ENCODE measurements at regions of chr20 and their contacts with region 1.

Region 1: DNA sequence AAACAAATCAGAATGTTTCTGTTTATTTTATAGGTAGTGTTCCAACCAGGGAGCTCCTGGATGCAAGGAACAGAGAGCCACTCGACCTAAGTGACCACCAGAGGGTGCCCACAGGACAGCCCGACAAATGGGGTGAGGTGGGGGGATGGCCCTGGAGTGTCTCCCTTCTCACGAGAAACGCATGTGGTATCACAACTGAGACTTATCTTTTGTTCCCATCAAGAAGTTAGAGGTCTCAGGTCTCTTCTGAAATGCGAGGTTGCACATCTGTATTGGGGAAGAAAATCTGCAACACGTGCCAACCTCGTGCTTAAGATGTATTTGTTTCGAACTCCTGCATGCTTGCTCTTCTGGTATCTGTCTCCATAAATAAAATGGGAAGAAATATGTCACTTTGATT is 104.0 kb downstream of the ISM1 start:
- DNase-seq: peak; percentile 51
- H3K4me3 Mint-ChIP-seq: no peak overlapping the region
- H3K27ac Mint-ChIP-seq: no peak overlapping the region
- H3K4me1 Mint-ChIP-seq: no peaks in the 10 kb centered on the region
- H3K27me3 Mint-ChIP-seq: no peaks in the 10 kb centered on the region
- CTCF ChIP-seq: peak; percentile 38

Region 2: DNA sequence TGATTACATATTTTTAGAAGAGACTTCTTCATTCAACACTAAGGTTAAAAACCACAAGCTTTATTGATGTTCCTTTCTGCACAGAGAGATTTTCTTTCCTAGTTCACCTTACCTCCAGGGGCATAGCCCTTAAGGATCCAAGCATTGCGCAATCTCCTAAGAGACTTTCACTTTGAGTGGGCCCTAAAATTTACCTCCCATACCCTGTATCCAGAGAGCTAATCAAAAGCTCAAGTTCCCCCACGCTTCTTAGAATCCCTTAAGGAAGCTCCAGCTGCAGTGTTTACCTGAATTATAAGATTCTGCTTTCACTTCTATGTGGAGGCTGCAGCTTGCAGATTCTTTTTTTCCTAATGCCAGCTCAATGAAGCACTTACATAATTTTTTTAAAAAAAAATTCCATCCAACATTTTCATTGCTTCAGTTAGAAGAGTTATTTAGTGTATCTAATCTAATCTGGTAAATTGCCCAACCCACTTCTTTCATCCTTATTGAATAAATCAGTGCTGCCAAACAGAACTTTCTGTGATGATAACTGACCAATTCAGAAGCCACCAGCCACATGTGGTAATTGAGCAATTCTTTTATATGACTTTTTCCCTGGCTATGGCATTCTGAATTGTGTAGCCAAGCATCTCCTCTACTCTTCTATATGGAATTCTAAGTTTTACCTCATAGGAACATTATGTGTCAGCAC is 340.8 kb before region 1 on chr20:
- CTCF ChIA-PET with region 1: no interaction called
- POLR2A ChIA-PET with region 1: no interaction called
- intact Hi-C with region 1: no loop called
- DNase-seq: peak; percentile 23
- H3K4me3 Mint-ChIP-seq: no peak overlapping the region
- H3K27ac Mint-ChIP-seq: no peak overlapping the region
- H3K4me1 Mint-ChIP-seq: peaks cover 15% of the 10 kb centered on the region
- H3K27me3 Mint-ChIP-seq: no peaks in the 10 kb centered on the region
- CTCF ChIP-seq: no peak

Region 3: DNA sequence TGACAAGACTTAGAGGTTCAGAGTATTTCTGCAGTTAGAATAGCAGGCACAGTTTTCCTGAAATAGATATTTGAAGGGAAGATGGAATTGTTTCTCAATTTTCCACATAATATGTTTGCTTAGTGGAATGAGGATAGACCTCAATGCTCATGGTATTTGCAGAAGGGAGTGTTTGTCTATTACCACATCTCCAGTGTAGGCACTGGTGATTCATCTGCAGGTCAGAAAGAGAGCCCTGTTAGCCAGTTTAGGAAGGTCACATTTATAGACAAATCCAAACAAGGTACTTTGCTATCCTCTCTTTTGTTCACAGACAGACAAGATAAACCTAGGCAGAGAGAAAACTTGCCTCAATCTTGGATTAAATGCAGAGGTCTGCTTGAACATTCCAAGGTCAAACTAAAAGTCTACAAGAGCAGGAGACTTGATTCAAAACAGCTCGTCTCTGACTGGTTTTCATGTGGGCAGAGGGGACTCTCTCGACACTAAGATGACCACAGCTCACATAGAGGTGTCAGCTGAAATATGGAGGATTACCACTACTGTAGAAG is 81.1 kb before region 1 on chr20:
- CTCF ChIA-PET with region 1: no interaction called
- POLR2A ChIA-PET with region 1: no interaction called
- intact Hi-C with region 1: no loop called
- DNase-seq: peak; percentile 62
- H3K4me3 Mint-ChIP-seq: no peak overlapping the region
- H3K27ac Mint-ChIP-seq: no peak overlapping the region
- H3K4me1 Mint-ChIP-seq: peaks cover 20% of the 10 kb centered on the region
- H3K27me3 Mint-ChIP-seq: no peaks in the 10 kb centered on the region
- CTCF ChIP-seq: no peak

Region 4: DNA sequence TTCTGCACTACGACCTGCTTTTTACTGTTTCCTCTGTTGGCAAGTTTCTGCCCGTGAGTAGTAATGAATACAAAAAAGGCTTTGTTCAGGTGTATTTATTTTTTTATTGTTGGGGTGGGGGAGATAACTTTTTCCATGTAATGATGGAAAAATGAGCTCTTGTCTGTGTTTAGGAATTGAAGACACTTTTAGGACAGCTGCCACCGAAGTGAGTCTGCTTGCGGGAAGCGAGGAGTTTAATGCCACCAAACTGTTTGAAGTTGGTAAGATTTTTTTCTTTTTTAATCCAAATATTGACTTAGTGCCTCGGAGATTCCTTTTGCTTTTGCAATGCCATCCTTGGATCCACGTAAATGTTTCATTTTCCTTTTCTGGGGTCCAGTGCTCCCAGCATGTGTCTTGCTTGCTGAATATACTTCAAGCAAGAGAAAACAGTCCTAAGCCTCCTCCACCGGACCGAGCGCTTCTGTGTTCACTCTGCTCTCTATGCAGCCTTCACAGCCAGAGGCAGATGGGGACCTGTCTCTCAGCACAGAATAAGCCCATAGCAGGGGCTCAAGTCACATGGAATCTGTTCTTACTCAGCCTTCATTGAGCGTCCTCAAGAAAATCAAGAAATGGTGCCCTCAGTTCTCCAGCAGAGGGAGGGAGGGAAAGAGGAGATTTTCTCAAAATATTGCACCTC is 32.7 kb before region 1 on chr20:
- CTCF ChIA-PET with region 1: no interaction called
- POLR2A ChIA-PET with region 1: no interaction called
- intact Hi-C with region 1: no loop called
- DNase-seq: no peak
- H3K4me3 Mint-ChIP-seq: no peak overlapping the region
- H3K27ac Mint-ChIP-seq: no peak overlapping the region
- H3K4me1 Mint-ChIP-seq: peaks cover 4% of the 10 kb centered on the region
- H3K27me3 Mint-ChIP-seq: no peaks in the 10 kb centered on the region
- CTCF ChIP-seq: no peak

Region 5: GRCh38 chr20:13341781-13342277 is 16.8 kb after region 1 on chr20:
- CTCF ChIA-PET with region 1: interaction called, 12 read pairs
- POLR2A ChIA-PET with region 1: no interaction called
- intact Hi-C with region 1: no loop called
- DNase-seq: no peak
- H3K4me3 Mint-ChIP-seq: no peak overlapping the region
- H3K27ac Mint-ChIP-seq: no peak overlapping the region
- H3K4me1 Mint-ChIP-seq: no peaks in the 10 kb centered on the region
- H3K27me3 Mint-ChIP-seq: no peaks in the 10 kb centered on the region
- CTCF ChIP-seq: no peak

Measured in MCF 10A (cell line).